Endothelial cell of umbilical vein (primary cell): ENCODE measurements at regions of chr1 and their contacts with region 1.

Region 1: GRCh38 chr1:229507951-229508822 is at the start of gene NUP133:
- DNase-seq: peak; percentile 99
- H3K4me3 ChIP-seq: peak within 1 kb of the TSS; percentile 61 to 93 (median 64)
- H3K27ac ChIP-seq: peak within 1 kb of the TSS; percentile 56
- H3K4me1 ChIP-seq: peaks cover 14% of the 10 kb centered on the region
- H3K27me3 ChIP-seq: no peaks in the 10 kb centered on the region
- CTCF ChIP-seq: no peak
- POLR2A ChIP-seq: peak; percentile 99
- total RNA-seq, gene NUP133: 35.9 and 43.2 TPM in 2 replicates

Region 2: DNA sequence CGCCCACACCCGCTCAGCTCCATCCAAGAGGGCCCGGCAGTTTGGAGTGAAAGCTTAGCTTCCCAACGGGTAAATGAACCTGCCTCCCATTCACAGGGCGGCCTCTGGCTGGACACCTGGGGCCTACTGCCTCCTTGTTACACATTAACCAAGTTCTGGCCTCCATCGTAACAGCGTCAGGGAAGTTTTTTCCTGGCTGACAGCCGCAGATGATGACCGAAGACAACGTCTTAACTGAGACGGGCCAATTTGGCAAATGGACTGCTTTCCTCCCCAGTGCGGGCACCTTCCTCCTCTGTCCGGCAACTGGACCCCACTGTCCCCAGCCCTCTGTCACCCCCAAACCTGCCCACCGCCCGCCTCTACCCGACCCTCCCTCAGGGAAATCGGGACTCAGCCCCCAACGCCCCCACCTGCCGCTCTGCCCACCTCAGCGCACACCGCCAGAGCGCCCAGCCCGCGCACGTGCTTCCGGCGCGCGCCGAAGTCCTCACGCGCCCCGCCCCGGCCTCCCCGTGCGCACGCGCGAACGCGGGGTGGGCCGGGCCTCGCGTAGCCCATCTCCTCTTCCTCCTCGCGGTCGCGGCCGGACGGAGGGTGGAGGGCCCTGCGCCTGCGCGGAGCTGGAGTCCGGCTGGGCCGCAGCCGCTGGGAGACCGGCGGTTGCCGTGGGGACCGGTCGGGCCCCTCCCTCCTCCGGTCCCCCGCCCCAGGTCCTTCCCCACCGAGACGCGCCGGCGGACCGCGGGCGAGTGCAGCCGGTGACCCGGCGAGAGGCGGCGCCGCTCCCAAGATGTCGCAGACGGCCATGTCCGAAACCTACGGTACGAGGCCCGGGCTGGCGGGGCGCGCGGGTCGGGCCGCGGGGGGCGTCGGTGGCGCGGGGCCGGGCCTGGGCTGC is 237.4 kb before region 1 on chr1 and contains the start of gene RAB4A:
- CTCF ChIA-PET with region 1: interaction called, 4 read pairs
- POLR2A ChIA-PET with region 1: no interaction called
- dilution Hi-C with region 1: no loop called
- intact Hi-C with region 1: loop called (anchors 5 kb)
- DNase-seq: peak; percentile 89
- H3K4me3 ChIP-seq: peak within 1 kb of the TSS; percentile 57 to 93 (median 85)
- H3K27ac ChIP-seq: no peak within 1 kb of the TSS
- H3K4me1 ChIP-seq: peaks cover 10% of the 10 kb centered on the region
- H3K27me3 ChIP-seq: no peaks in the 10 kb centered on the region
- CTCF ChIP-seq: no peak
- POLR2A ChIP-seq: peak; percentile 76
- total RNA-seq, gene RAB4A: 43.2 and 52.9 TPM in 2 replicates

Region 3: DNA sequence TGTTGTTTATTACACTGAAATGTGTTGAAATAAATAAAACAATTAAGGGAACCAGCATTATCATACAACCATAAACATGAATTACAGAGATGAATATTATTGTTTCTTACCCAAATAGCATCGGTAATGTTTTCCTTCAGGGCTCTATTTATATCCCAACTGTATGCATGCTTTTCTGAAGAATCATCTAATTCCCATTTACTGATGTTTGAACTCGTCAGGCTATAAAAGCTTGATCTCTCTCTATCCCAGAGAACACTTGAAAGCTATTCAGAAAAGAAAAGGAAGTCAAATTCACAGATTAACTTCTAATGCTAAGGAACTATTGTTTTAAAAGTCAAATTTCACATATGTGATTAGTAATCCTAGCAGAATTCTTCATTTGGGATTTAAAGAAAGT is 12.4 kb before region 1 on chr1:
- CTCF ChIA-PET with region 1: no interaction called
- POLR2A ChIA-PET with region 1: no interaction called
- dilution Hi-C with region 1: no loop called
- intact Hi-C with region 1: no loop called
- DNase-seq: no peak
- H3K4me3 ChIP-seq: no peak overlapping the region
- H3K27ac ChIP-seq: no peak overlapping the region
- H3K4me1 ChIP-seq: no peaks in the 10 kb centered on the region
- H3K27me3 ChIP-seq: no peaks in the 10 kb centered on the region
- CTCF ChIP-seq: no peak
- POLR2A ChIP-seq: no peak

Region 4: GRCh38 chr1:229523052-229523451 is 14.9 kb after region 1 on chr1:
- CTCF ChIA-PET with region 1: no interaction called
- POLR2A ChIA-PET with region 1: no interaction called
- dilution Hi-C with region 1: no loop called
- intact Hi-C with region 1: no loop called
- DNase-seq: no peak
- H3K4me3 ChIP-seq: no peak overlapping the region
- H3K27ac ChIP-seq: no peak overlapping the region
- H3K4me1 ChIP-seq: no peaks in the 10 kb centered on the region
- H3K27me3 ChIP-seq: no peaks in the 10 kb centered on the region
- CTCF ChIP-seq: no peak
- POLR2A ChIP-seq: no peak

Region 5: DNA sequence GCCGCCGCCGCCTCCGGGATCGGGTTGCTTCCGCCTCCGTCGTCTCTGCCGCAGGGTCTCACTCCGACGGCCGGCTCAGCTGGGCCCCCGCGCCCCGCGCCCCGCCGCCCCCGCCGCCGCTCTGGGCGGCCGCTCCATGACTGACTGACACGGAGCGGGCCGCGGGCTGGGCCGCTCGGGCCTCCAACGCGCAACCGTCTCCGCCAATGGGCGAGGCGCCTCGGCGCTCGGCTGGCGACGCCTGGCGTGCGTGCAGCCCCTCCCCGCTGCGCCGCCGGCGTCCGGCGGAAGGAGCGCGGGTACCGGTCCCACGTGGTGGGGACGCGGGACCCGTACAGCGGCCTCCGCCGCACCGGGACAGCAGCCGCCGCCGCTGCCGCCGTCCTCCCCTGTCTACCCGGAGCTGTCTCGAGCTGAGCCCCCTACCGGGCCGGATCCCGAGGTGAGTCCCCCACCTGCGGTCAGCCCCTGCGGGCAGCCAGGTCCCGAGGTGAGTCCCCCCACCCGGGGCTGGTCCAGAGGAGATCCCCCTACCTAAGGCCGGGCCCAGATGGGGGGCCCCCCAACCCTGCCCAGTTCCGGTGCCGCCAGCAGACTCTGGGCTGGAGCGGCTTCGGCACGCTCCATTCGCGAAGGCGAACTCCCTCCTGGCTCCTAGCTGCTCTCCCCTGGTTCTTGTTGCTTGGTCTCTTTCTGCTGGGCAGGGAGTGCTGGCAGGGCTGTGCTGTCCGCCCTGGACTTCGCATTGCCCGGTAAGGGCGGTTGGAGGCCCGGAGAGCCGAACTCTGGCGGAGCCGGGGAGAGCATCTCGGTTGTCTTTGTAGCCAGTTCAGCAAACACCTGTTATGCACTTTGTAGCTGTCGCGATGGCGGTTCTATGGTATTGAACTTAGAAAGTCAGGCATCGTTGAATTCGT is 118.0 kb after region 1 on chr1 and contains the starts of genes TAF5L and URB2:
- CTCF ChIA-PET with region 1: no interaction called
- POLR2A ChIA-PET with region 1: no interaction called
- dilution Hi-C with region 1: no loop called
- intact Hi-C with region 1: loop called (anchors 1 kb)
- DNase-seq: peak; percentile 84
- H3K4me3 ChIP-seq: peak within 1 kb of the TSS; percentile 75 to 98 (median 96)
- H3K27ac ChIP-seq: peak within 1 kb of the TSS; percentile 41
- H3K4me1 ChIP-seq: peaks cover 16% of the 10 kb centered on the region
- H3K27me3 ChIP-seq: no peaks in the 10 kb centered on the region
- CTCF ChIP-seq: no peak
- POLR2A ChIP-seq: peak; percentile 69
- total RNA-seq, gene TAF5L: 20.3 and 24.8 TPM in 2 replicates
- total RNA-seq, gene URB2: 12.4 and 12.7 TPM in 2 replicates